Activated naive CD4-positive, alpha-beta T cell treated with anti-CD3 and anti-CD28 coated beads, Interleukin-2, amount 10 ng/mL, durations not matched to agents 7 days and 5 days (primary cell): ENCODE measurements at regions of chr2 and their contacts with region 1.

Region 1: GRCh38 chr2:135797497-135798274 is 39.3 kb downstream of the LCT start:
- DNase-seq: peak; percentile 86
- H3K4me3 Mint-ChIP-seq: no peak overlapping the region
- H3K27ac Mint-ChIP-seq: no peak overlapping the region
- H3K4me1 Mint-ChIP-seq: peaks cover 14% of the 10 kb centered on the region
- H3K27me3 Mint-ChIP-seq: peaks cover 8% of the 10 kb centered on the region

Region 2: GRCh38 chr2:134988994-134989605 is 808.6 kb before region 1 on chr2:
- CTCF ChIA-PET with region 1: interaction called, 17 read pairs
- DNase-seq: no peak
- H3K4me3 Mint-ChIP-seq: no peak overlapping the region
- H3K27ac Mint-ChIP-seq: no peak overlapping the region
- H3K4me1 Mint-ChIP-seq: no peaks in the 10 kb centered on the region
- H3K27me3 Mint-ChIP-seq: peaks cover 17% of the 10 kb centered on the region

Region 3: GRCh38 chr2:135473567-135473966 is 324.1 kb before region 1 on chr2:
- CTCF ChIA-PET with region 1: interaction called, 10 read pairs
- DNase-seq: peak; percentile 46
- H3K4me3 Mint-ChIP-seq: no peak overlapping the region
- H3K27ac Mint-ChIP-seq: no peak overlapping the region
- H3K4me1 Mint-ChIP-seq: no peaks in the 10 kb centered on the region
- H3K27me3 Mint-ChIP-seq: no peaks in the 10 kb centered on the region

Region 4: GRCh38 chr2:135785032-135785431 is 12.7 kb before region 1 on chr2:
- CTCF ChIA-PET with region 1: interaction called, 11 read pairs
- DNase-seq: no peak
- H3K4me3 Mint-ChIP-seq: no peak overlapping the region
- H3K27ac Mint-ChIP-seq: no peak overlapping the region
- H3K4me1 Mint-ChIP-seq: no peaks in the 10 kb centered on the region
- H3K27me3 Mint-ChIP-seq: no peaks in the 10 kb centered on the region

Region 5: GRCh38 chr2:135818937-135819610 is 21.4 kb after region 1 on chr2:
- CTCF ChIA-PET with region 1: interaction called, 10 read pairs
- DNase-seq: peak; percentile 64
- H3K4me3 Mint-ChIP-seq: no peak overlapping the region
- H3K27ac Mint-ChIP-seq: peak overlapping the region; percentile 13
- H3K4me1 Mint-ChIP-seq: peaks cover 30% of the 10 kb centered on the region
- H3K27me3 Mint-ChIP-seq: peaks cover 3% of the 10 kb centered on the region